Common myeloid progenitor, CD34-positive (primary cell): ENCODE measurements at regions of chr14 and their contacts with region 1.

Region 1: DNA sequence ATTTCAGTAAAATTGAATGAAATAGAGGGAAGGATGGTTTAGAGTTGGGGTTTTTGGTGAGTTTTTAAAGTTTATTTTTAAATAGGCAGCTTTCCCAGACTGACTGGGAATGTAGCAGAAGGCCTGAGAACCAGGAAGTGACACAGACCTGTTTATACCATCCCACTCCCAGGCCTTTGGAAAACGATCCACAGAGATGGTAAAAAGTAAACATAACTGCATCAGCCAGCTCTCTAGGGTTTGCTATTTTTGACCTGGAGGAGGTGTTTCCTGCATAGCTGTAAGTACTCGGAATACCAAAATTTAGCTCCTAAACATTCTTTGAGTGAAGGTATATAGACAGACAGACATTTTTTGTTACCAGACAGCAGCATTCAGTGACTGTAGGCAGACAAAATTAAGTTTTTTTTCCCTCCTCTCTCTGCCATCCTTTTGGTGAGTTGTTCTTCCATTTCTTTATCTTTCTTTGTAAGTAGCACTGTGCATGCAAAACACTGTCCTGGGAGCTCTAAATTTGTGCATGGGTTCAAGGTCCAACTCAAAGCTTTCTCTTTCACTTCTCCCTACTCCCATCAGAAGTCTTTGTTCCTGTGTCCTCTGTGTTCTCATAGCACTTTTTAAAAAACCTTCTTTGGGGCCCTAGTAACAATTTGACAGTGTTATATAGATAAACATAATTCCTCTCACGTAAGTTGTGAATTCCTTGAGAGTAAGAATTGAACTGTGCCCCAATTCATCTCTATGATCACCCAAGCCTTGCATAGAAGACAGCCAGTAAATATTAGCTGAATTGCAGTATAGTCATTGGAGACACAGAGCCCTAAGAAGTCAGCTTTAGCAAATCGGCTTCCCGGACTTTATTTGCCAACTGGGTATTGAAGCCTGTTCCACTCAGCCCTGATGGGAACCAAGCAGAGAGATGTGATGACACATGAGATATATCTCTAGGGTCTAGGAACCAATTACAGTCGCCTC is 37.4 kb downstream of the SUSD6 start:
- DNase-seq: no peak
- H3K4me3 ChIP-seq: peak overlapping the region in 1 of 7 experiments; percentile 8
- H3K27ac ChIP-seq: peak overlapping the region in 1 of 2 experiments; percentile 62
- H3K4me1 ChIP-seq: peaks cover 14 to 66% (median 54%) of the 10 kb centered on the region in 4 experiments
- H3K27me3 ChIP-seq: no peaks in the 10 kb centered on the region

Region 2: DNA sequence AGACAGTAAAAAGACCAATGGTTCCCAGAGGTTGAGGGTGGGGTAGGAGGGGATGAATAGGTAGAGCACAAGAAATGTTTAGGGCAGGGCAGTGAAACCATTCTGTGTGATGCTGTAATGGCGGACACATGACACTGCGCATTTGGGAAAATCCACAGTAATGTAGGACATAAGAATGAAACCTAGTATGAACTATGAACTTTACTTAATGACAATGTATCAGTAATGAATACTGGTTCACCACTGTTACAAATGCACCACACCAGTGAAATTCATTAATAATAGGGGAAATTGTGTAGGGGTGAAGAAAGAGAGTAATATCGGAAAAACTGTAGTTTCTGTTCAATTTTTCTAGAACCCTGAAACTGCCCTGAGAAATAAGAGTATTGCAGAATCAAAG is 256.3 kb before region 1 on chr14:
- CTCF ChIA-PET with region 1: no interaction called
- POLR2A ChIA-PET with region 1: no interaction called
- DNase-seq: no peak
- H3K4me3 ChIP-seq: no peak overlapping the region
- H3K27ac ChIP-seq: no peak overlapping the region
- H3K4me1 ChIP-seq: peaks cover 2 to 13% (median 10%) of the 10 kb centered on the region in 4 experiments
- H3K27me3 ChIP-seq: no peaks in the 10 kb centered on the region

Region 3: GRCh38 chr14:69629225-69630127 is 19.3 kb before region 1 on chr14:
- CTCF ChIA-PET with region 1: interaction called, 11 read pairs
- POLR2A ChIA-PET with region 1: interaction called, 3 read pairs
- DNase-seq: no peak
- H3K4me3 ChIP-seq: no peak overlapping the region
- H3K27ac ChIP-seq: no peak overlapping the region
- H3K4me1 ChIP-seq: peaks cover 32 to 84% (median 68%) of the 10 kb centered on the region in 4 experiments
- H3K27me3 ChIP-seq: no peaks in the 10 kb centered on the region

Region 4: GRCh38 chr14:69637503-69638030 is 11.2 kb before region 1 on chr14:
- CTCF ChIA-PET with region 1: interaction called, 19 read pairs
- POLR2A ChIA-PET with region 1: interaction called, 3 read pairs
- DNase-seq: no peak
- H3K4me3 ChIP-seq: no peak overlapping the region
- H3K27ac ChIP-seq: no peak overlapping the region
- H3K4me1 ChIP-seq: peaks cover 6 to 62% (median 49%) of the 10 kb centered on the region in 4 experiments
- H3K27me3 ChIP-seq: no peaks in the 10 kb centered on the region